ENCODE measurements at regions of chr2 and their contacts with region 1.

Region 1: GRCh38 chr2:105294844-105295481 is 34.6 kb downstream of the TGFBRAP1 start:
- DNase-seq: peak; percentile 57
- H3K4me3 ChIP-seq: no peak overlapping the region
- H3K27ac ChIP-seq: no peak overlapping the region
- H3K4me1 ChIP-seq: no peaks in the 10 kb centered on the region
- H3K27me3 ChIP-seq: no peaks in the 10 kb centered on the region
- CTCF ChIP-seq: peak; percentile 48 to 71
- POLR2A ChIP-seq: no peak

Region 2: DNA sequence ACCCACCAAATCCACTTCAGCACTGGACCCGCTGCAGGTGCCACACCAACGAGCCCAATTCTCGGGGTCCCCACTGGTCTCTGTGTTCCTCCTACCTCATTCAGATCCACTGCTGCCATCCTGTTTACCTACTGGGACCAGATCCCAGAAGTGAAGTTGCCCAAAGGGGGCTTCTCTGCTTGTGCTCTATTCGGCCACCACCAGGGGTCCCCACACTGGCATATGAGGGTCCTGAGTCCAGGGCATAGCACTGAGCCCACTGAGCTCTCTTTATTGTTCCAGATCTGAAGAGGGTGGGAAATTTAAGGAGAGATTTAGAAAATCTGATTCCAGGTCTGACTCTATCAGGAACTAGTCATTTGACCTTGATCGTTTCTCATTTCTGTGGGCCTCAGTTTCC is 51.0 kb before region 1 on chr2:
- CTCF ChIA-PET with region 1: interaction called, 24 read pairs
- POLR2A ChIA-PET with region 1: no interaction called
- dilution Hi-C with region 1: no loop called
- intact Hi-C with region 1: loop called (anchors 2 kb)
- DNase-seq: no peak
- H3K4me3 ChIP-seq: no peak overlapping the region
- H3K27ac ChIP-seq: no peak overlapping the region
- H3K4me1 ChIP-seq: no peaks in the 10 kb centered on the region
- H3K27me3 ChIP-seq: peaks cover 1 to 3% of the 10 kb centered on the region in 2 experiments
- CTCF ChIP-seq: peak; percentile 28 to 58
- POLR2A ChIP-seq: no peak

Region 3: DNA sequence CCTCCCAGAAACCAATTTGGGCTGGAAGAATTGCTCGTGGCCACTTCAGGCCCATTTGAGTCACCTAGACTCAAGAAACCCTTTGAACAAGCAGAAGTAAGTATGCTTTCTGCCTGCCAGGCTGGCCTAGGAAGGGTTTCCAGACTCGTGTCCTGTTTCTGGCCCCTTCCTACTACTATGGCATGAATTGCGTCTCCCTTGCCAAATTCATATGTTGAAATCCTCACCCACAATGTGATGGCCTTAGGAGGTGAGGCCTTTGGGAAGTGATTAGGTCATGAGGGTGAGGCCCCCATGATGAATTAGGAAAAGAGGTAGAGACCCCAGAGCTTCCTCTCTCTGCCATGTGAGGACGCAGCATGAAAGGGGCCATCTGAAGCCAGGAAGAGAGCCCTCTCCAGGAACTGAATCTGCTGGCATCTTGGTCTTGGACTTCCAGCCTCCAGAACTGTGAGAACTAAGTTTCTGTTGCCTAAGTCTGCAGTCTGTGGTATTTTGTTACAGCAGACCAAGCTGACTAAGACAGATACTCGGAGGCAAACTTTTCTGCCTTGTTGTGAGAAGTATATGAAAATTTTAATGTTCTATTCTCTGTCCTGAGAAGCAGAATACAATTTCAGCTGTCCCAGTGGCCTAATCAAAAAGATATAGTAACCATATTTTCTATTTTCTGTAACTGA is 40.3 kb before region 1 on chr2:
- CTCF ChIA-PET with region 1: no interaction called
- POLR2A ChIA-PET with region 1: no interaction called
- dilution Hi-C with region 1: no loop called
- intact Hi-C with region 1: no loop called
- DNase-seq: no peak
- H3K4me3 ChIP-seq: no peak overlapping the region
- H3K27ac ChIP-seq: no peak overlapping the region
- H3K4me1 ChIP-seq: no peaks in the 10 kb centered on the region
- H3K27me3 ChIP-seq: no peaks in the 10 kb centered on the region
- CTCF ChIP-seq: no peak
- POLR2A ChIP-seq: no peak

Region 4: GRCh38 chr2:105278654-105279053 is 16.3 kb before region 1 on chr2:
- CTCF ChIA-PET with region 1: interaction called, 13 read pairs
- POLR2A ChIA-PET with region 1: no interaction called
- dilution Hi-C with region 1: no loop called
- intact Hi-C with region 1: no loop called
- DNase-seq: no peak
- H3K4me3 ChIP-seq: no peak overlapping the region
- H3K27ac ChIP-seq: no peak overlapping the region
- H3K4me1 ChIP-seq: peaks cover 11% of the 10 kb centered on the region
- H3K27me3 ChIP-seq: no peaks in the 10 kb centered on the region
- CTCF ChIP-seq: no peak
- POLR2A ChIP-seq: no peak

Region 5: GRCh38 chr2:105315314-105315713 is 20.4 kb after region 1 on chr2:
- CTCF ChIA-PET with region 1: interaction called, 10 read pairs
- POLR2A ChIA-PET with region 1: no interaction called
- dilution Hi-C with region 1: no loop called
- intact Hi-C with region 1: no loop called
- DNase-seq: no peak
- H3K4me3 ChIP-seq: no peak overlapping the region
- H3K27ac ChIP-seq: no peak overlapping the region
- H3K4me1 ChIP-seq: peaks cover 7% of the 10 kb centered on the region
- H3K27me3 ChIP-seq: no peaks in the 10 kb centered on the region
- CTCF ChIP-seq: no peak
- POLR2A ChIP-seq: no peak

Region 6: GRCh38 chr2:105324732-105325131 is 29.8 kb after region 1 on chr2:
- CTCF ChIA-PET with region 1: interaction called, 10 read pairs
- POLR2A ChIA-PET with region 1: no interaction called
- dilution Hi-C with region 1: no loop called
- intact Hi-C with region 1: loop called (anchors 2 kb)
- DNase-seq: peak; percentile 40
- H3K4me3 ChIP-seq: no peak overlapping the region
- H3K27ac ChIP-seq: peak overlapping the region; percentile 87
- H3K4me1 ChIP-seq: peaks cover 49% of the 10 kb centered on the region
- H3K27me3 ChIP-seq: no peaks in the 10 kb centered on the region
- CTCF ChIP-seq: no peak
- POLR2A ChIP-seq: peak; percentile 43